HEK293T (cell line): ENCODE measurements at regions of chr4 and their contacts with region 1.

Region 1: GRCh38 chr4:55635741-55636655 is at the start of gene NMU:
- DNase-seq: peak; percentile 57

Region 2: GRCh38 chr4:55409468-55410171 is 226.4 kb before region 1 on chr4:
- CTCF ChIA-PET with region 1: interaction called, 10 read pairs
- POLR2A ChIA-PET with region 1: no interaction called
- DNase-seq: no peak